Aorta (tissue), 5 donors: ENCODE measurements at regions of chr15 and their contacts with region 1.

Region 1: DNA sequence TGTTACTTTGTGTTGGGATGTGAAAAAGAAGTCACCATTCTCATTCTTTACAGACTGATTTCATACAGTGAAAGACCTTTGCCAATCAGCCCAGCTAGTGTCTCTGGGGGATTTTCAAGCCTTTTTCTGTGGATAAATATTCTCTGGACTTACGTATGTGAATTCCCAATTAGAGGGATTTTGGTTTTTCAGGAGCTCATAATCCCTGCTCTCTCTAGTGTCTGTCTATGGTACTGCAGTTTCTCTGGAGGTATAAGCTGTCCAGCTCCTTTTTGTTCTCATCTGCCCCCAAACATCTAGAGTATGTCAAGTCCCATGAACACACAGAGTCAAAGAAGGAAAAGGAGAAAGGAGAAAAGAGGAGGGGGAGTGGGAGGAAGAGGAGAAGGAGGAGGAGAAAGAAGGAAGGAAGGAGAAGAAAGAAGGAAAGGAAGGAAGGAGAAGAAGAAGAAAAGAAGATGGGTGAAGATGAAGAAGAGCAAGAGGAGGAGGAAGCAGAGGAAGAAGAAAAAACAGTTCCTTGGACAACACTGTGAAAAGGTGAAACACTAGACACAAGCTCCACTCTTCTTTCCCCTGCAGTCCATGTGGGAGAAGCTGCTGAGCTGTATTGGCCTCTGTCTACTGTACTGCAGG is 218.6 kb downstream of the GREM1 start:
- DNase-seq: no peak
- ATAC-seq: peak; percentile 62
- H3K4me3 ChIP-seq: no peak overlapping the region
- H3K27ac ChIP-seq: no peak overlapping the region
- H3K4me1 ChIP-seq: no peaks in the 10 kb centered on the region
- H3K27me3 ChIP-seq: no peaks in the 10 kb centered on the region

Region 2: DNA sequence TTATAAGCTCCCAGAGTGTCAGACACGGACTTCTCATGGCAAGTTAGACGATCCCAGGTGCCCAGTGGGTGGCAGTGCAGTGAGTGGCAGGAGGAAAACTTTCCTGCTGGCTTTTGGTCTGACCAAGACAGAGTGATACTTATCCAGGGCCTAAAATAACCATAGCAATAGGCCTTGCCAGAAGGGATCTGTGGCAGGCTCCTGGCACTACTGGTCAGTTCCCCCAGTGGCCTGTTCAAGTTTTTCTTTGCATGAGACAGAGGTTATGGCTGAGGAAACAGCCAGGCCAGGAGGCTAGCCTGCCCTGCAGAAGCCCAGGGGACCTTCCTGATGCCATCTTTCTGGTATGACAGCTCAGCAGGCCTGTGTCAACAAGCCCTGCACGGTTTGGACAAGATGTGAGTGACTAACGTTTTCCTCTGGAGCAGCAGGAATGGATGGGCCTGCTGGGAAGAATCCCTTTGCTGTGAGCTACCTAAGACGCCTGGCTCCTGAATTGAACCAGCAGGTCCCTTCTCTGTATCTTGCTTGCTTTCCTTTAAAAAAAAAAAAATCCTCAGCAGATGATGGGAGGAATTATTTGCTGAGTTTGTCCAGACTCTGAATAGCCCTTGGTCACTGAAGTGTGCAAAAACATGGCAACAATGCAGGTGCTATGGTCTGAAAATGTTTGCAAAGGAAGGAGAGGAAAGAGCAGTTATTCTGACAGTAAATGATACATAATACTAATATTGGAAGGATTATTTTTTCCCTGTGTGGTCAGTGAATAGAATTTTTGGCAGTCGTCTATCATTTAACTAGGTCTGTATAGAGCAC is 276.9 kb before region 1 on chr15:
- intact Hi-C with region 1: loop called (anchors 5 to 10 kb)
- DNase-seq: peak; percentile 63 to 80
- ATAC-seq: peak; percentile 88
- H3K4me3 ChIP-seq: no peak overlapping the region
- H3K27ac ChIP-seq: peak overlapping the region in 1 of 2 donors; percentile 2
- H3K4me1 ChIP-seq: peaks cover 0 to 2% of the 10 kb centered on the region in 2 donors
- H3K27me3 ChIP-seq: no peaks in the 10 kb centered on the region

Region 3: GRCh38 chr15:32844118-32844711 is 92.2 kb before region 1 on chr15:
- intact Hi-C with region 1: loop called (anchors 5 kb)
- DNase-seq: no peak
- ATAC-seq: no peak
- H3K4me3 ChIP-seq: no peak overlapping the region
- H3K27ac ChIP-seq: no peak overlapping the region
- H3K4me1 ChIP-seq: no peaks in the 10 kb centered on the region
- H3K27me3 ChIP-seq: no peaks in the 10 kb centered on the region

Region 4: DNA sequence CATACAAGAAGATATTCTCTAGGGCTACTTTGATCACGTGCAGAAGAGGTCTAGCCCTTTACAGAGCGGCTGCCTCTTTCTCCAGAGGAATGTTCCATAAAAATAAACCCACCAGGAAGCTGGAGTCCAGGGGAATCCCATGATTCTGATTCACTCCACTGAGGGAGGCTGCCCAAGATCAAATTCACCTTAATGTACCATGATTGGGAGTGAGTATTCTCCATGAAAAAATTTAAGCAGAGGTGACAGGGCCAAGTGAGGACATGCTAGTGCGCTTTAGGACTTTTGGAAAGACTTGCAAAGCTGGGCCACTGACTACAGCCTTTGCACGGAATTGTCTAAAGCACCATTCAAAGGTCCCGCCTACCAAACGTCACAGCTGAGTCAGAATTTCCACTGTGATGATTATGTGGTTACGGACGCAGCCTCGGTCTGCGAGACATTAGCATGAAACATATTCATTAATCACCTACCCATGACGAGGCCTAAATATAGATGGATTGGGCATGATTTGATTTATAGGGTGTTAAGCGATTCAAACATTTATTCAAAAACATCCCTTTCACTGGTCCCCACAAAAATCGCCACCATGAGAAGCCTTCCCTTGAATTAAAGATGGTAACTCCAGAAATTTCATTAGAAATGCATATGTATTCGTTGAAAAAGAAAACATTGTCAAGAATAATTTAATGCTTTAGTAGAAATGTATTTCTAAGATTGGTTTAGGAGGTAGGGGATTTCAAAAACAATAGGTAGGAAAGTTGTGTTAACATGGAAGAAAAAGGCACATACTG is 66.0 kb before region 1 on chr15:
- intact Hi-C with region 1: no loop called
- DNase-seq: no peak
- ATAC-seq: no peak
- H3K4me3 ChIP-seq: no peak overlapping the region
- H3K27ac ChIP-seq: no peak overlapping the region
- H3K4me1 ChIP-seq: peaks cover 1 to 3% of the 10 kb centered on the region in 2 donors
- H3K27me3 ChIP-seq: no peaks in the 10 kb centered on the region

Region 5: DNA sequence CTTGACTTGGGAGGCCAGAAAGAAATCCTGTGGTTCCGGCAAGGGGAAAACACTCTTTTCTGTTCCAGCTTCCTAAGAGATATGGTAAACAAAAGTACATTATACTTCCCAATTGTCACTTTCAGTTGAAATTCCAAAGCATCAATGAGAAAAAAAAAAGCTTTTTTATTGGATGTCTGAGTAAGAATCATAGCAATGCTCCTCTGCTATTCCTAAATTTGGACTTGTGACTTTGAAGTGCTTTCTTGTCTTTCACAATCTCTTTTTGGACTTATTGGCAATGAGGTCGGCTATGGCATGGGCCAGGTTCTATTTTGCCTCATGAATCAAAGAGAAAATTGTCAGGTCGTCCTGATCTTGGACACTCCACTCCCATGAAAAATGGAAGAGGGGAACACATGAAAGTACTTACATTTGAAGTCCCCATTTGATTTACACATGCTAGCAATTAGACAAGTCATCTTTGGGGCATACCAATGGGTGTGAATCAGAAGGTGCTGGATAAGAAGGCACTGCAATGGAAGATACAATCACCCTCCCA is 48.1 kb before region 1 on chr15:
- intact Hi-C with region 1: no loop called
- DNase-seq: no peak
- ATAC-seq: no peak
- H3K4me3 ChIP-seq: no peak overlapping the region
- H3K27ac ChIP-seq: no peak overlapping the region
- H3K4me1 ChIP-seq: no peaks in the 10 kb centered on the region
- H3K27me3 ChIP-seq: no peaks in the 10 kb centered on the region

Region 6: GRCh38 chr15:32919749-32920414 is 16.5 kb before region 1 on chr15:
- intact Hi-C with region 1: no loop called
- DNase-seq: no peak
- ATAC-seq: no peak
- H3K4me3 ChIP-seq: no peak overlapping the region
- H3K27ac ChIP-seq: no peak overlapping the region
- H3K4me1 ChIP-seq: peaks cover 3 to 9% of the 10 kb centered on the region in 2 donors
- H3K27me3 ChIP-seq: no peaks in the 10 kb centered on the region

Region 7: DNA sequence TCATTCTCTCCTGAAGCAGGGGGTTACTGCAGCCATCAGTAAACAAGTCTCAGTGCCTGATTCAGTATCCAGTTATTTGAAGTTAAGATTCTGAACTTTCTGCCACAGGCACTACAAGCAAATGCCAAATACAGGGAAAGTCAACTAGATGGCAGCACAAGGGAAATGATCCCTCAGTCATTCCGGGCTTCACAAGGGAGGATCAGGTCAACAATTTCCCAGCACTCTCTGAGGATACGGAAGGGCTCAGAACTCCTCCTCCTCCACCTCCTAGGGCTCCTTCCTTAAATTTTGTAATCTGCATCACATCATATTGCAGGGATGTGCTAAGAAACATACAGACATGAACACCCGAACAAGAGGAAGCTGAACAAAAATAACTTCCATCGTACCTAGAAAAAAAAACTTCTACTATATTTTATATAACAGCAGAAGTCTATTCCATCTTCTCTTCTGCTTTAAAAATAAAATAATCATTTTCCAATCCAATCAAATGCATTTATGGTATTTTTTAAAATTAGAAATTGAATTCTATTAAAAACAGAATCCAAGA is 71.0 kb after region 1 on chr15:
- intact Hi-C with region 1: loop called in 1 of 2 experiments (anchors 10 kb)
- DNase-seq: no peak
- ATAC-seq: peak; percentile 58
- H3K4me3 ChIP-seq: no peak overlapping the region
- H3K27ac ChIP-seq: peak overlapping the region in 1 of 2 donors; percentile 43
- H3K4me1 ChIP-seq: peaks cover 0 to 1% of the 10 kb centered on the region in 2 donors
- H3K27me3 ChIP-seq: no peaks in the 10 kb centered on the region

Region 8: DNA sequence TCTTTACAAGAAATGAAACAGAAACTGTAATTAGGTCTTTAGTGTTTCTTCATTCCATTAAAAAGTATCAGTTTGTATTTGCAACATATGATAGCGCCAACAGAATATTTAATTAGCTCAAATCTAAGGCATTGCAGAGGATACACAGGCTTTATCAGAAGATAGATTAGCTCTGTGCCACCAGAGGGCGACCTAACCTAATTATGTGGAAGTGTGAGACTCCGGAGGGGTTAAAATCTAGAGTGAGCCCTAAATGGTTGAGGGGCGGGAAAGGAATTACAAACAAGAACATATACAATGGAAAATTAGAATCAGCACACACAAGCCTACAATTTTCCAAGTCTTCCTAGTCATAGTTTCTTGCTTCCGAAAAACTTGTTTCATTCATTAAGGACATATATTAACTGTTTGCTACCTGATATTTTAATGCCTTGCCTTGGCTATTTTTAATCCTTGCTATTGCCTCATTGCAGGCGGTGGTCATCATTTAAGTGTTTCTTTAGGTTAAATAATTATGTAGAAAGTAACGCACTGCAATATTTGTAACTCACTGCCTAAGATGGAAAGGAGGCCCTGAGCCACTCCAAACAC is 356.4 kb after region 1 on chr15:
- intact Hi-C with region 1: no loop called
- DNase-seq: peak in 1 of 2 donors; percentile 57
- ATAC-seq: peak; percentile 82
- H3K4me3 ChIP-seq: peak overlapping the region in 1 of 2 donors; percentile 48
- H3K27ac ChIP-seq: peak overlapping the region in 1 of 2 donors; percentile 24
- H3K4me1 ChIP-seq: no peaks in the 10 kb centered on the region
- H3K27me3 ChIP-seq: no peaks in the 10 kb centered on the region